Brain microvascular endothelial cell (primary cell): ENCODE measurements at regions of chr7 and their contacts with region 1.

Region 1: DNA sequence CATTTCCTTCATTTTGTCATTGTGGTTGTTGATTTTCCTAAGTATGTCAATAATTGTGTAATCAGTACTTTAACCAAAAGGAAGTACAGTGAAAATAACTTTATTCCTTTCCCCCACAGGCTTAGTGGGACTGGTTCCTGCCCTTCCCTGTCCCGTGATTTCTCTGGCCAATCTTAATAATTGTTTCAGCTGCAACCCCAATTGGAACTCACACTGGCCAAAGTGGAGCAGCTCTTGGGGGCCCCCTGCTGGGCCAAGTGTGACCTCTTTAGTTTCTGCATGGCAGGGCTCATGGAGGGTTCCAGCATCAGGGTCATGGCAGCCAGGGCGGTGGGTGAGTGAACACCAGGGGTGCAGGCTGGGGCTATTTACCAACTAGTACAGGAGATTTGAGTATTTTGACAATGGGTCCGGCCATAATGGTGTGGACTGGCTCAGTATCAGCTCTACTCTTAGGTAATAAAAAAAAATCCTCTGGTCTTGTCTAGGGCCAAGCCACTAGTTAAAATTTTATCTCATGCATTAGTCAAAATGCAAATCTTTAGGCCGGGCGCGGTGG is 31.7 kb downstream of the CYCS start:
- DNase-seq: peak; percentile 77
- H3K4me3 ChIP-seq: no peak overlapping the region
- H3K27ac ChIP-seq: no peak overlapping the region
- H3K27me3 ChIP-seq: no peaks in the 10 kb centered on the region
- CTCF ChIP-seq: peak; percentile 96

Region 2: GRCh38 chr7:24819916-24820689 is 273.2 kb before region 1 on chr7:
- in situ Hi-C with region 1: loop called (anchors 25 kb)
- DNase-seq: peak; percentile 85
- H3K4me3 ChIP-seq: no peak overlapping the region
- H3K27ac ChIP-seq: peak overlapping the region; percentile 90
- H3K27me3 ChIP-seq: no peaks in the 10 kb centered on the region
- CTCF ChIP-seq: peak; percentile 94

Region 3: DNA sequence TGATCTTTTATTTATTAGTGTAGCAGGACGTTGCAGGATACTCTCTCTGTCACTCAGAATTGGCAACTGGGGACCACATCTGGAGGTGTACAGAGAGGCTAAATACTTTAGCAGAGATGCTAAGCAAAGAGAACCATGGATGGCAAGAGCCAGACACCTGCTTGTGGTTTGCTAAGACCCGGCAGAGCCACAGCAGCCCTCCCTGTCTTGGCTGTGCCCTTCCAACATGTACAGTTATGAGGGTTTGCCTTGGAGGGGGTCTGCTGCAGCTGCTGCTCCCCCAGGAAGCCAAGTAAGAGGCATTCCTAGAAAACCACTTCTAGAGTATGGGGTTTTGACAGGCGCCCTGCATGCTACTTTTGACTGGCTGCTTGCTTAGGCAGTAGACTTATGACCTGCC is 129.9 kb after region 1 on chr7:
- in situ Hi-C with region 1: no loop called
- DNase-seq: no peak
- H3K4me3 ChIP-seq: no peak overlapping the region
- H3K27ac ChIP-seq: no peak overlapping the region
- H3K27me3 ChIP-seq: no peaks in the 10 kb centered on the region
- CTCF ChIP-seq: no peak